ENCODE measurements at regions of chr6 and their contacts with region 1.

Region 1: DNA sequence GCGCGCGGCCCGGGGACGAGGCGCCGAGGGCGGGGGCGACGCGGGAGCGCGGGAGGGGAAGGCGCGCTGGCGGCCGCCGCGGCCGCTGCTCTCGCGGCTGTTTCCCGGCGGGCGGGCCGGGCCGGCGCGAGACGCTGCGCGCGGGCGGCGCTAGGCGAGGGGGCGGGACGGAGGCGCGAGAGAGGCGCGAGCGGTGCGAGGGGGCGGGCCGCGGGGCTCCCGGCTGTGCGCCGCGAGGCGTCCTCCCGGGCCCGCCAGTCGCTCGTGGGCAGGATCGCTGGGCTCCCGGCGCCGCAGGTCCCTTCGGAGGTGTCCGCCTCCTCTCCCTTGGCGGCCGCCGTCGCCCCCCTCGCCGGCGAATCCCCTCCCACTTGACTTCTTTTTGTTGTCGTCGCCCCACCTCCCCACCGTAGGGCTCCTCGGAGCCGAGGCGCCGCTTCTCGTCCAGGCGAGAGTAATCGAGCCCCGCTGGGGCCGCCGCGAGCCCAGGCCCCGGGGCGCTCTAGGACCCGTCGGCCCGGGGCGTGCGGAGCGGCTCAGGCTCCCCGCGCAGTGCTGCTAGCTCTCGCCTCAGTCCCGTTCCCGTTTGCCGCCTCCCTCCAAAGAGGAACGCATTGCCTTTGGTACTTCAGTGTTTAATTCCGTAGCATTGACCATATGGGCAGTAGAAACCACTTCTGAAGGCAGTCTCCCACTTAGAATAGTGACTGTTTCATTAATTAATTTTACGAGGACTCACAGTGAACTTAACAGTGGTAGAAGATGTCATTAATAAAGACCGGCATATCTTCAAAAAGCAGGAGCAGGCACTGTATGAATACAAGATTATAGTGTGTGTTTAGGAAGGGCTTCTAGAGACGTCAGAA is at the start of gene RANBP9:
- DNase-seq: peak; percentile 76 to 95 (median 85)
- ATAC-seq: peak; percentile 81
- H3K4me3 ChIP-seq: peak within 1 kb of the TSS; percentile 80
- H3K4me3 Mint-ChIP-seq: peak within 1 kb of the TSS; percentile 96
- H3K27ac ChIP-seq: peak within 1 kb of the TSS; percentile 78 to 81
- H3K27ac Mint-ChIP-seq: peak within 1 kb of the TSS; percentile 98
- H3K4me1 ChIP-seq: peaks cover 26% of the 10 kb centered on the region
- H3K4me1 Mint-ChIP-seq: peaks cover 52% of the 10 kb centered on the region
- H3K27me3 ChIP-seq: no peaks in the 10 kb centered on the region
- H3K27me3 Mint-ChIP-seq: no peaks in the 10 kb centered on the region
- CTCF ChIP-seq: no peak
- total RNA-seq, gene RANBP9: 60.8 to 62.9 TPM

Region 2: DNA sequence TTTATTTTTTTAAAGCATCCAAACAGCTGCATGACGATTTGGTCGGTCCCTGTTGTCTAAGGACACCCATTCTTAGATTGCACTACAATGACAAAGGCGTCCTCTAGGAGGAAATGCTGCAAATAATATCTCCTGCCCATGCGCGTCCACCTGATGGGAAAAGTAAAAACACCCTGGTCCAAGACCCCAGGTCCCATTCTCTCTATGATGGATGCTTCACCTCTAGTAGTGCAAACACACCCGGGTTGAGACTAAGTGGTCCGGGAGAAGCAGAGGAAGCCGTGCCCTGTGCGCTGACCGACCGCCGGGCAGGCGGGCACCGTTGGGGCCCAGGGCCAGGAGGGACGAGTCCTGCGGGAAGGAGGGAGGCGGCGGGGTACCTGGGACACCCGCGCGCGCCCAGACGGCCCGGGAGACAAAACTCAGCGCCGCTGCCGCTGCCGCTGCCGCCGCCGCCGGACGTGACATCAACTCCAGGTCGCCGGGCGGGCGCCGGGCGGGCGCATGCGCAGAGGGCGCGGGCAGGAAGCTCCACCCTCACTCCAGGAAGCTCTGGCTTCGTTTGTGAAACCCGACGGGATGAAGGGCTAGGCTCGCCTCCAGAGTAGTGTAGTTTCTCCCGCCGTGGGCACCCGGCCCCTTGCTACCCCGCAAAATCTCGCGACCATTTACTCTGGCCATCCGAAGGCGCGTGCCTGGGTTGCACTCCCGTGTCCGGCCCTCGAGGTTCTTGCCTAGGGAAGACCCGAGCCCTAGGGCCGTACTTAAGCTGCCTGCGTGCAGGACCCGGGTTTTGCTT is 383.7 kb before region 1 on chr6 and contains the start of gene TBC1D7:
- CTCF ChIA-PET with region 1: no interaction called
- POLR2A ChIA-PET with region 1: interaction called, 5 read pairs
- intact Hi-C with region 1: loop called (anchors 5 kb)
- DNase-seq: peak; percentile 85 to 97 (median 92)
- ATAC-seq: peak; percentile 87
- H3K4me3 ChIP-seq: peak within 1 kb of the TSS; percentile 91
- H3K4me3 Mint-ChIP-seq: peak within 1 kb of the TSS; percentile 97
- H3K27ac ChIP-seq: peak within 1 kb of the TSS; percentile 88 to 95
- H3K27ac Mint-ChIP-seq: peak within 1 kb of the TSS; percentile 99
- H3K4me1 ChIP-seq: peaks cover 13% of the 10 kb centered on the region
- H3K4me1 Mint-ChIP-seq: peaks cover 38% of the 10 kb centered on the region
- H3K27me3 ChIP-seq: no peaks in the 10 kb centered on the region
- H3K27me3 Mint-ChIP-seq: no peaks in the 10 kb centered on the region
- CTCF ChIP-seq: no peak
- total RNA-seq, gene TBC1D7: 10.2 to 12.3 TPM

Region 3: DNA sequence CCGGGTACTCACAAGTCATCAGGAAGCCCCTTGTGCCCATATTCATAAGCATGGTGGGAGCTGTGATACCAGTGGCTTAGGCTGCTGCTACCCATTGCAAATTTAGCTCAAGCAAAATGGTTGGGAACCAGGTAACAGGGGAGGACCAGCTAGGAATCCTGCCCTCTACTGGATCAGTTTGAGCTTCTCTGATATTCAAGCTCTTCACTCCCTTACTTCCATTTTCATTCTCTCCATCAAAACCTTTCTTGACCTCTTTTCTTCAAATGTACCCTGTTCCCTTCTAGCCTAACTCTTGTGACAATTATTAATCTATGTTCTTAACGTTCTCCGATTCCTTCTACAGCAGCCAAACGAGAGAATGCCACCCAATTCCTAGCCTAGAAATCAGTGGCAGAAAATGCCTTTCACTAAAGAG is 87.1 kb before region 1 on chr6:
- CTCF ChIA-PET with region 1: interaction called, 7 read pairs
- POLR2A ChIA-PET with region 1: interaction called, 11 read pairs
- intact Hi-C with region 1: no loop called
- DNase-seq: peak in 7 of 14 experiments; percentile 2 to 72 (median 26)
- ATAC-seq: peak; percentile 92
- H3K4me3 ChIP-seq: no peak overlapping the region
- H3K4me3 Mint-ChIP-seq: no peak overlapping the region
- H3K27ac ChIP-seq: no peak overlapping the region
- H3K27ac Mint-ChIP-seq: peak overlapping the region; percentile 70
- H3K4me1 ChIP-seq: no peaks in the 10 kb centered on the region
- H3K4me1 Mint-ChIP-seq: peaks cover 6% of the 10 kb centered on the region
- H3K27me3 ChIP-seq: no peaks in the 10 kb centered on the region
- H3K27me3 Mint-ChIP-seq: no peaks in the 10 kb centered on the region
- CTCF ChIP-seq: peak; percentile 42

Region 4: DNA sequence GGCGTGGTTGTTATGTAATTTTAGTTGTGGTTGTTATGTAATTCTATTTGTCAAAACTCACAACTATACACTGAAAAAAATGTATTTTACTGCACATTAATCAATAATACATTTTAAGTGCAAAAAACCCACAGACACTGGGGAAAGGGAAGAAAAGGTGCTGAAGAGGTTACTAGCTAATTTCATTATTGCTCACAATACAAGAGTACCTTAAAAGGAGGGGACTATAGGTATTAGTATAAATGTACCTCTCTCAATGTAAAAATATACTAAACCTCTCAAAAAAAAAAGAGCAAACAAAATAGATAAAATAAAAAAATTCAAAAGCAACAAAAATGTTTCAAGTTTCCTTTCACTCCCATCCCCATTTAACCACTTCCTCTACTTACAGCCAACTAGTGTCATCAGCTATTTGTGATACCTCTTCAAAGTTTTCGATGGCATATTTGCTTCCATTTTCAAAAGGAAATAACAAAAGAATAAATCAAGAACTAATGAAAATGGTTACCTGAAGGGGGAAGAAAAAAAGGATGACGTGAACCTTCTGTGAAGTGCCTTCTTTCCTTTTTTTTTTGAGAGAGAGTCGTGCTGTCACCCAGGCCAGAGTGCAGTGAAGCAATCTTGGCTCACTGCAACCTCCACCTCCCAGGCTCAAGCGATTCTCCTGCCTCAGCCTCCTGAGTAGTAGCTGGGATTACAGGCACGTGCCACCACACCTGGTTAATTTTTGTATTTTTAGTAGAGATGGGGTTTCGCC is 30.5 kb before region 1 on chr6:
- CTCF ChIA-PET with region 1: no interaction called
- POLR2A ChIA-PET with region 1: interaction called, 40 read pairs
- intact Hi-C with region 1: no loop called
- DNase-seq: peak in 4 of 14 experiments; percentile 18 to 82 (median 74)
- ATAC-seq: peak; percentile 81
- H3K4me3 ChIP-seq: peak overlapping the region; percentile 22
- H3K4me3 Mint-ChIP-seq: peak overlapping the region; percentile 50
- H3K27ac ChIP-seq: peak overlapping the region; percentile 21 to 62
- H3K27ac Mint-ChIP-seq: peak overlapping the region; percentile 83
- H3K4me1 ChIP-seq: peaks cover 35% of the 10 kb centered on the region
- H3K4me1 Mint-ChIP-seq: peaks cover 65% of the 10 kb centered on the region
- H3K27me3 ChIP-seq: no peaks in the 10 kb centered on the region
- H3K27me3 Mint-ChIP-seq: no peaks in the 10 kb centered on the region
- CTCF ChIP-seq: no peak

Region 5: DNA sequence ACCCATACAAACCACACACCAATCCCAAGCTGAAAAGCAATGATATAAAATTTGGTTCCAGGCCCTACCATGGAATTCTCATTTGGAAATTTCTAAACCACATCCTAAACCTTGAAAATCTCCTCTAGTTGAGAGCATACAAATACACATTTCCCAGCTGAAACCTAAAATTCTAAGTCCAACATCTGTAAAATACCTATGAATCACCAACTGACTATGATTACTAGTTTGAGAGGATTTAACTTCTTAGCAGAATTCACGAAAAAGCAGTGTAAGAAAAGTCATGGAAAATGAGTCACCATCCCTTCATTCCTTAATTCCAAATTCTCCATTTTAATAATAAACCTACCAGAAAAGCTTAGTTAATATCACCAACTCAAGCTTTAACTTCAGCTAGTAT is 15.7 kb before region 1 on chr6:
- CTCF ChIA-PET with region 1: interaction called, 3 read pairs
- POLR2A ChIA-PET with region 1: interaction called, 70 read pairs
- intact Hi-C with region 1: no loop called
- DNase-seq: no peak
- ATAC-seq: no peak
- H3K4me3 ChIP-seq: no peak overlapping the region
- H3K4me3 Mint-ChIP-seq: no peak overlapping the region
- H3K27ac ChIP-seq: peak overlapping the region; percentile 1 to 57
- H3K27ac Mint-ChIP-seq: peak overlapping the region; percentile 91
- H3K4me1 ChIP-seq: peaks cover 23% of the 10 kb centered on the region
- H3K4me1 Mint-ChIP-seq: peaks cover 71% of the 10 kb centered on the region
- H3K27me3 ChIP-seq: no peaks in the 10 kb centered on the region
- H3K27me3 Mint-ChIP-seq: no peaks in the 10 kb centered on the region
- CTCF ChIP-seq: no peak

Region 6: DNA sequence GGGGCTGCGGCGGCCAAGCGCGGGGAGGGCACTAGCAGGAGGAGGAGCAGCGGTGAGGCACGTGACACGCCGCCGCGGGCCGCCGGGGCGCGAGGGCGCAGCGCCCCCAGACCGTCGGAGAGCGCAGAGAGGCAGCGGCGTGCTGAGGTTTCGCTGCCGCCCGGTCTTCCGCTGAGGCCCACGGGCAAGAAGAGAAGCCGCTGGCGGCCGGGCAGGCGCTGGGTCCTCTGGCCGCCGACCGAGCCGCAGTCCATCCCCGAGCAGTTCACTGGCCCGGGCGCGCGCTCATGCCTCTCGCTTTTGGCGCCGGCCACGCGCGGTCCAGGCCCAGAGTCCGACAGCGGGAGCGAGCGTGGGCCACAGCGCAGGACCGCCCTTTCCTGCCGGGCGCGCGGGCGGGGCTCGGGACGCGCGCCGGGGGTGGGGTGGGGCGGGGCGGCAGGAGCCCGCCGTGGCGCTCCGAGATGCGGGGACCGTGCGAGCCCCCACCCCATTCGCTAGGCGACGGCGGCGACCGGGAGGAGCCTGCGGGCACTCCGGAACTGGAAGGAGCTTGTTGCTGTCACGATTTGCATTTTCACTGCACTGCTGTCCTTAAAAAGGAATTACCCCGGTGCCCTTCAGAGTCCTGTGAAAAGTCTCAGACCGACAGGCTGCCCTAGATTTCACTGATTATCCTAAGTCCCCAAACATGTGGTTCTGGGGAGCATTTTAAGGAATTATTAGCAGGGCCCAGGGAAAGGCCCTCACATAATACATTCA is 102.4 kb after region 1 on chr6 and contains the start of gene MCUR1:
- CTCF ChIA-PET with region 1: no interaction called
- POLR2A ChIA-PET with region 1: interaction called, 4 read pairs
- intact Hi-C with region 1: loop called in 1 of 2 experiments (anchors 5 kb)
- DNase-seq: peak; percentile 54 to 94 (median 73)
- ATAC-seq: peak; percentile 83
- H3K4me3 ChIP-seq: peak within 1 kb of the TSS; percentile 70
- H3K4me3 Mint-ChIP-seq: peak within 1 kb of the TSS; percentile 90
- H3K27ac ChIP-seq: peak within 1 kb of the TSS; percentile 72 to 80
- H3K27ac Mint-ChIP-seq: peak within 1 kb of the TSS; percentile 86
- H3K4me1 ChIP-seq: peaks cover 18% of the 10 kb centered on the region
- H3K4me1 Mint-ChIP-seq: peaks cover 37% of the 10 kb centered on the region
- H3K27me3 ChIP-seq: no peaks in the 10 kb centered on the region
- H3K27me3 Mint-ChIP-seq: no peaks in the 10 kb centered on the region
- CTCF ChIP-seq: peak; percentile 20
- total RNA-seq, gene MCUR1: 3.2 to 4.5 TPM